ENCODE measurements at regions of chr3 and their contacts with region 1.

Region 1: DNA sequence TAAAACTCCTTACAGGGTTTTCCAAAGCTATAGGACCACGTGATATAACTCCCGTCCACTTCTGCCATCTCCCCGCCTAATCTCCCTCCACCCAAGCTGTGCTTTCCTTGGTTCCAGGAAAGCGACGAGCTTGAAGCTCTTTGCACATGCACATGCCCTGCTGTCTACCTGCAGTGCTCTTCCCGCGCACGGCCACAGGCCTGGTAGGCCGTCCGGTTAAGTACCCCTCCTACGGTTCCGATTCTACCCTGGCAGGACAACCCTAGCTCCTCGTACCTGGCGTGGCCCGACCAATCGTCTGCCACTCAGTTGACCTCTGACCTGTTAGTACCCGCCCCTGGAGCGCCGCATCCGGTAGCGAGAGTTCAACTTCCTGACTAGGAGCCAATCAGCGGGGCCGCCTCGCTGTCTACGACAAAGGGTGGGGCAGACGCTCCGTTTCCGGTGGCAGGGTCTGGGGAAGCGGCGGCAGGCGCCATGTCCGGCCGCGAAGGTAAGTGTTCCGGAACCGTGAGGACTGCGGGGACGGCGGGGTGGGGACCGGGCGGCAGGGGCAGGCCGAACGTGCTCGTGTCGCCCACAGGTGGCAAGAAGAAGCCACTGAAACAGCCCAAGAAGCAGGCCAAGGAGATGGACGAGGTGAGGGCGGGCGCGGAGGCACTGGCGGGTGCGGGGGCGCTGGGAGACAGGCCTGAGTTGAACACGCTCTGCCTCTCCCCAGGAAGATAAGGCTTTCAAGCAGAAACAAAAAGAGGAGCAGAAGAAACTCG is at the starts of genes CCDC51 and TMA7:
- DNase-seq: peak; percentile 99
- ATAC-seq: peak; percentile 95
- H3K4me3 Mint-ChIP-seq: peak within 1 kb of the TSS; percentile 99
- H3K27ac Mint-ChIP-seq: peak within 1 kb of the TSS; percentile 99
- H3K4me1 Mint-ChIP-seq: peaks cover 17% of the 10 kb centered on the region
- H3K27me3 Mint-ChIP-seq: no peaks in the 10 kb centered on the region
- CTCF ChIP-seq: no peak
- total RNA-seq, gene CCDC51: 23.9 to 25.1 TPM (median 24.7 TPM) in 3 replicates
- total RNA-seq, gene TMA7: 281 to 318 TPM (median 285 TPM) in 3 replicates

Region 2: GRCh38 chr3:46713898-46714552 is 1726.0 kb before region 1 on chr3:
- CTCF ChIA-PET with region 1: no interaction called
- POLR2A ChIA-PET with region 1: no interaction called
- DNase-seq: peak; percentile 7
- ATAC-seq: no peak
- H3K4me3 Mint-ChIP-seq: no peak overlapping the region
- H3K27ac Mint-ChIP-seq: no peak overlapping the region
- H3K4me1 Mint-ChIP-seq: no peaks in the 10 kb centered on the region
- H3K27me3 Mint-ChIP-seq: peaks cover 2% of the 10 kb centered on the region; the same call in 1 of the 2 replicates
- CTCF ChIP-seq: no peak

Region 3: GRCh38 chr3:48194446-48195071 is 245.4 kb before region 1 on chr3:
- CTCF ChIA-PET with region 1: interaction called, 149 read pairs
- POLR2A ChIA-PET with region 1: no interaction called
- DNase-seq: peak; percentile 86
- ATAC-seq: peak; percentile 67
- H3K4me3 Mint-ChIP-seq: no peak overlapping the region
- H3K27ac Mint-ChIP-seq: no peak overlapping the region
- H3K4me1 Mint-ChIP-seq: peaks cover 34% of the 10 kb centered on the region
- H3K27me3 Mint-ChIP-seq: no peaks in the 10 kb centered on the region; the same call in 1 of the 2 replicates
- CTCF ChIP-seq: peak; percentile 76

Region 4: GRCh38 chr3:48273594-48274211 is 166.3 kb before region 1 on chr3:
- CTCF ChIA-PET with region 1: interaction called, 91 read pairs
- POLR2A ChIA-PET with region 1: no interaction called
- DNase-seq: peak; percentile 65
- ATAC-seq: peak; percentile 51
- H3K4me3 Mint-ChIP-seq: no peak overlapping the region
- H3K27ac Mint-ChIP-seq: no peak overlapping the region
- H3K4me1 Mint-ChIP-seq: peaks cover 42% of the 10 kb centered on the region
- H3K27me3 Mint-ChIP-seq: no peaks in the 10 kb centered on the region
- CTCF ChIP-seq: peak; percentile 55

Region 5: DNA sequence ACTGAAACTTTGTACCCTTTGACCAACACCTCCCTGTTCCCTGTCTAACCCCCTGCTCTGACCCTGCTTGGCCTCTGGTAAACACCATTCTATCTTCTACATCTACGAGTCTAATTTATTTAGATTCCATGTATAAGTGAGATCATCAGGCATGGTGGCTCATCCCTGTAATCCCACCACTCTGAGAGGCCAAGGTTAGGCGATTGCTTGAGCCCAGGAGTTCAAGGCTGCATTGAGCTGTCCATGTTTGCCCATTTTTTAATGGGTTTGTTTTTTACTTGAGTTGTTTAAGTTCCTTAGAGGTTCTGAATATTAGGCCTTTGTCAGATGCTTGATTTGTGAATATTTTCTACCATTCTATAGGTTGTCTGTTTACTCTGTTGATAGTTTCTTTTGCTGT is 51.0 kb before region 1 on chr3:
- CTCF ChIA-PET with region 1: interaction called, 12 read pairs
- POLR2A ChIA-PET with region 1: no interaction called
- DNase-seq: no peak
- ATAC-seq: no peak
- H3K4me3 Mint-ChIP-seq: no peak overlapping the region
- H3K27ac Mint-ChIP-seq: no peak overlapping the region
- H3K4me1 Mint-ChIP-seq: no peaks in the 10 kb centered on the region
- H3K27me3 Mint-ChIP-seq: peaks cover 3% of the 10 kb centered on the region
- CTCF ChIP-seq: no peak

Region 6: GRCh38 chr3:48465531-48466378 is 25.8 kb after region 1 on chr3:
- CTCF ChIA-PET with region 1: interaction called, 14 read pairs
- POLR2A ChIA-PET with region 1: no interaction called
- DNase-seq: peak; percentile 92
- ATAC-seq: peak; percentile 94
- H3K4me3 Mint-ChIP-seq: peak overlapping the region; percentile 7
- H3K27ac Mint-ChIP-seq: peak overlapping the region; percentile 97
- H3K4me1 Mint-ChIP-seq: peaks cover 21% of the 10 kb centered on the region
- H3K27me3 Mint-ChIP-seq: no peaks in the 10 kb centered on the region
- CTCF ChIP-seq: no peak

Region 7: GRCh38 chr3:48543271-48543866 is 103.4 kb after region 1 on chr3:
- CTCF ChIA-PET with region 1: interaction called, 35 read pairs
- POLR2A ChIA-PET with region 1: no interaction called
- DNase-seq: no peak
- ATAC-seq: no peak
- H3K4me3 Mint-ChIP-seq: no peak overlapping the region
- H3K27ac Mint-ChIP-seq: peak overlapping the region; percentile 43; the same call in 1 of the 2 replicates
- H3K4me1 Mint-ChIP-seq: no peaks in the 10 kb centered on the region
- H3K27me3 Mint-ChIP-seq: no peaks in the 10 kb centered on the region
- CTCF ChIP-seq: no peak

Region 8: GRCh38 chr3:48663415-48664312 is 223.7 kb after region 1 on chr3:
- CTCF ChIA-PET with region 1: interaction called, 13 read pairs
- POLR2A ChIA-PET with region 1: interaction called, 4 read pairs
- DNase-seq: peak; percentile 99
- ATAC-seq: peak; percentile 79
- H3K4me3 Mint-ChIP-seq: peak overlapping the region; percentile 88
- H3K27ac Mint-ChIP-seq: peak overlapping the region; percentile 100
- H3K4me1 Mint-ChIP-seq: peaks cover 14% of the 10 kb centered on the region
- H3K27me3 Mint-ChIP-seq: no peaks in the 10 kb centered on the region
- CTCF ChIP-seq: peak; percentile 64; the same call in 1 of the 2 replicates